Left cardiac atrium (tissue), 4 donors: ENCODE measurements at regions of chr1 and their contacts with region 1.

Region 1: DNA sequence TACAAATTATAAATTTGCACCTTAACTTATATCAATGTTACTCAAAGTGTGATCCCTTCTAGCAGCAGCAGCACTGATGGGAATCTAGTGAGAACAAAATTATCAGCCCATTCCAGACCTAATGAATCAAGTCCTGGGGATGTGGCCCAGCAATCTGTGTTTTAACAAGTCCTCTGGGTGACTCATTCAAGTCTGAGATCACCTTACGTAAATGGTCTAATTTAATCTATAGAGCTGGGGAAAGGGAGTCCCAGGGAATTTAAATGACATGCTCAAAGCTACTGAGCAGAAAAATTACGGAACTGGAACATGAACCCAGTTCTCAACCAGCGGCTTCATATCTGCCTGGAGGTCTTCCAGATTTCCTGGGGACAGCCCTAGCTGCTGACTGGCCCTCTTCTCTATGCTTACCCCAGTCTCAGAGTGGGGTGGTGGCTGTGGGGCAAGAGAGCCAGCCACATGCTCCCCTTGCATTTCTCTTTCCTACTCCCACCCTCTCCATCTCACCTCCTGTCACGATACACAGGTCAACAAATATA is 220.0 kb downstream of the TM2D1 start:
- DNase-seq: no peak
- ATAC-seq: no peak

Region 2: DNA sequence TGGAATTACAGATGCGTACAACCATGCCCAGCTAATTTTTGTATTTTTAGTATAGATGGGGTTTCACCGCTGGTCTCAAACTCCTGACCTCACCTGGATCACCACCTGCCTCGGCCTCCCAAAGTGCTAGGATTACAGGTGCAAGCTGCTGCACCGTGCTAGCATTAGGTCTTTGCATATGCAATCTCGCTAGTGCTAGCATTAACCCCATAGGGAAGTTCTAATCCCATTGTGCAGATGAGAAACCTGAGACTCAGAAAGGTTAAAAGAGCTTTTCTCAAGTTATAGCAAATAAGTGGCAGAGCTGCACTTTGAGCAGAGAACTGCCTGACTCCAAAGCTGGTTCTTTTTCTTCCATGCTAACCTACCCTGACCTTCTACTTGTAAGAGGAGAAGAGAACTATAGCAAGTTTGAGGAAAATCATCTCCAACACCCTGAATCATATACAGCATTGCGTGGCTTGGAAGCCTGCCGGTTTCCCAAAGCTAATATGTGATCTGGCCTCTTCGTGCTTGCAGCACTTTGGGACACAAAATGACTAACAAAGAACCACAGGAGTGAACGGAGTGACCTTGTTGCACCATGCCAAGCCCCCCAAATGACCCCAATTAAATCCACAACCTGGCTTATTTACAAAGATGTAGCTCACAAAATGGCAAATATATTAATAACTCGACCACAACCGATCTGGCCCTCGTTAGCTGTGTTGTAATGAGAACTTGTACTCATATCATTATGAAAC is 35.0 kb after region 1 on chr1:
- intact Hi-C with region 1: loop called in 1 of 2 experiments (anchors 5 kb)
- DNase-seq: no peak
- ATAC-seq: no peak